Psoas muscle (tissue), 8 donors: ENCODE measurements at regions of chr5 and their contacts with region 1.

Region 1: GRCh38 chr5:135551593-135552447 is 16.1 kb upstream of the NEUROG1 start:
- DNase-seq: peak; percentile 58 to 75
- ATAC-seq: peak; percentile 81 to 94 (median 86)
- H3K4me3 ChIP-seq: no peak overlapping the region
- H3K27ac ChIP-seq: no peak overlapping the region
- H3K4me1 ChIP-seq: no peaks in the 10 kb centered on the region
- H3K27me3 ChIP-seq: peaks cover 0 to 18% (median 5%) of the 10 kb centered on the region in 3 donors
- CTCF ChIP-seq: peak; percentile 92

Region 2: DNA sequence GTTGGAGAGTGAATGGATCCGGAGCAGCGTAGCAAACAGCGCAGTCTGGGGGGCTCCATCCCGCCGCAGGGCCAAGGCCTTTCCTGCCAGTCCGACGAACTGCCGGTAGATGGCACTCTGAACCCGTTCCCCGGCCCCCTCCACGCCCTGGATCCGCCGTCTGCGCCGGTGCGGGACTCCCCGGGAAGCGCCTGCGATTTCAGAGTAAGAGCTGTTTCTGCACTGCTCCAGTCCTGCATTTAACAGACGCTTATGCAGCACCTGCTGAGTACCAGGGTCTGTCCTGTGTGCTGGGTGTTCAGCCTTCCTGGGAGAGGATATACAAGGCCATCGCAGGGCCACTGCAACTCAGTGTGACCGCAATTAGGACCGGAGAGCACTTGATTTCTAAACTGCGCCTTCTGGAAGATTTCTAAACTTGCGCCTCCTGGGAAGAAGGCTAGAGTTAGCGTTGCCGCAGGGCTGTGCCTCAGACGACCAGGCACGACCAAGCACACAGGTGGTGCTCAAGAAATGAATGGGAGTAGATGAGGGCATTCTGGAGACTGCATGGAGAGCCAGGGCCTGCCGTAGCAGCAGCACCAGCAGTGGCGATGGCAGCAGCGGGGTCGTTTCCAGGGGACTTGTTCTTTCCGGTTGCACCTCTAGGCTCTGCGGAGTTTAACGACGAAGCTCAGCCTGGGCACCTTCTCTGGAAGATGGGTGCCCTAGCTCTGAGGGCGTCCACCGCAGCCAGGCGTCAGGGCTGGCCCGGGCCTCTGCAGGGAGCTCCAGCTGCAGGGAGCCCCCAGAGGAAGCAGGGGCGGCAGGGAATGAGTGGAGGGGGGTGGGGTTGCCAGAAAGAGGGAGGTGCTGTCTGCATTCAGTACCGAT is 85.4 kb before region 1 on chr5:
- intact Hi-C with region 1: loop called (anchors 1 to 2 kb)
- DNase-seq: peak; percentile 68 to 87
- ATAC-seq: peak; percentile 92 to 99 (median 94)
- H3K4me3 ChIP-seq: peak overlapping the region; percentile 49
- H3K27ac ChIP-seq: no peak overlapping the region
- H3K4me1 ChIP-seq: no peaks in the 10 kb centered on the region
- H3K27me3 ChIP-seq: peaks cover 0 to 19% (median 0%) of the 10 kb centered on the region in 3 donors
- CTCF ChIP-seq: peak; percentile 86

Region 3: DNA sequence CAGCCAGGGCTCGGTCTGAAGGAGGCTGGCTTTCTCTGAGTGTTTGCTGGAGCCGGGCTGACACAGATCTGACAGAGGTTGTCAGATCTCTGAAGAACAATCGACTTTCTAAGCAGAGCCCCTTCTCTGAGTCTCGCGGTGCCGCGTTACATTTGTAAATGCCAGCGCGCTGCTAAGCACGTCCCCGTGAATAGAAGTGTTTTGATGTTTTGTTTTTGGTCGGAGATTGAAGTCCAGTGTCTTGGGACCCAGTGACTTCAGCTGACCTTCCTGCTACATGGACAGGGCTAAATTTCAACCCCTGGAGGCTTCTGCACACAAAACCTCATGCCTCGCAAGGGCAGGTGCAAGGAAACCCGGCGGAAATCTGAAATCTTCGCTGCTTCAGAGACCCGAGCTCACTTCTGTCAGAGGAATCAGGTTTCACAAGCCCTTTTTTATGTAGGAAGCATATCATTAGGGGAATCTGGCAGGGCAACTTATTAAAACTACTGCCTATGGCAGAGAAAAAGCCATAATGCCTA is 43.3 kb before region 1 on chr5:
- intact Hi-C with region 1: no loop called
- DNase-seq: no peak
- ATAC-seq: peak in 1 of 4 donors; percentile 46
- H3K4me3 ChIP-seq: peak overlapping the region; percentile 42
- H3K27ac ChIP-seq: no peak overlapping the region
- H3K4me1 ChIP-seq: peaks cover 4% of the 10 kb centered on the region
- H3K27me3 ChIP-seq: peaks cover 0 to 23% (median 2%) of the 10 kb centered on the region in 3 donors
- CTCF ChIP-seq: no peak